ENCODE measurements at regions of chr2 and their contacts with region 1.

Region 1: DNA sequence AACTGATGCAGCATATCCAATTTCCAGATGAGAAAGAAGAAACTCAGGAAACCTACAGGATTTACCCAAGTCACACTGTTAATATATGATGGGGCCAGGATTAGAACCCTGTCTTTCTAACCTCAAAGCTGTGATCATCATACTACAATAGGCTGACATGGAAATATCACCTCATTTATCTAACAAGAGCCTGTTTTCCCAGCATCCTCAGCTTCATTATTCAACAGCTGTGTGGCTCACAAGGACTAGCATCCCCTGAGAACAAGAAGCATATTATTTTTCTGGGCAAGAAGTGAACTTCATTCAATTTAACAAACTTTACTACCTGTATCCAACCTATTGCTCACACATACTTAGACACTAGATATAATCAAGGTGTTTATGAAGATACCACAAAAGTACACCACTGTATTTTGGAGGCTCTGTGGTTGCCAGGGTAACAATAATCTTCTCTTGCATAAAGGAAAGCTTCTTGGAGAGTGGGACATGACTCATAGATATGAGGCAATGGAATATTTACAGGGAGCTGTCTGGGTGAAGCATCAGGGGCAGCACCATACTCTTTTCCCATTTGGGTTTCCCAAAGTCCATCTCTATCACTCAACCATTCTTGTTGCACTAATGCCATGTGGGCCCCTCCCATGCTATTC is 218.2 kb downstream of the RAD51AP2 start:
- DNase-seq: peak; percentile 99
- H3K4me3 ChIP-seq: no peak overlapping the region
- H3K27ac ChIP-seq: peak overlapping the region; percentile 82
- H3K4me1 ChIP-seq: peaks cover 35% of the 10 kb centered on the region
- H3K27me3 ChIP-seq: no peaks in the 10 kb centered on the region
- CTCF ChIP-seq: no peak

Region 2: DNA sequence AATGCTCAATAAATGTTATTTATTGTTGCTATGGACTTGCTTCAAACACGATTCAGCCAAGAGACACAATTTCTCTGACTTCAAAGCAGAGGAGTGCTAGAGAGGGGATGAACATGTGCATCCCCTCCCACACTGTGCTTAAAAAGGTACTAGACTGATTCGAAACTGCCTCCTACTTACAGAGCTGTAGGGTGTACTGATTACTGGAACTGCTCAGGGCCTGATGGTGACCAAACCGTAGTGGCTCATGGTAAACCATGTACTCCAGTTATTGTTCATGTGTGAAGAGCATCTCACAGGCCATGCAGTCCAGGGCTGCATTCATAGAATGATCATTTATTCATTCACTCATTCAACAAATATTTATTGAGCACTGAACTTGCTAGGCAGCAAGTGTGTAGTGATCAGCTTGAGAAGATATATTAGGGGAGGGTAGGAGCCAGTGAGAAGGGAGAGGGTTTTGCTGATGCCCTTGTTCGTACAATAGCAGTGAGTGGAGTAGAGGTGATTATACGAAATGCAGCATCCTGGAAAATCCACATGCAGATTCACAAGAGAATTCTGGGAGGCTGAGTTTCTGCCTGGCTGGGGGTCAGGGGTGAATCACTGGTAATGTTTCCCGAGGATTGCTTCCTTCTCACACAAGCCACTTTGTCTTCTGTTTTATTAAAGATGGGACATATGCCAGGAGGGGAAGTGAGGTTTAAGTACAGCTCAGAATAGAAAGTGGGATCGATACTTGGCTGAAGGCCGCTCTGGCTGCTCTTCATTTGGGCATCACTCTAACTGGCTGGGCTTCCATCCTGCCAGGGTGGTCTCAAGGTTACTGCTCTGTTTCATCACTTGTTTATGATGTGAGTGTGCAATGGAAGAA is 27.1 kb before region 1 on chr2:
- CTCF ChIA-PET with region 1: no interaction called
- dilution Hi-C with region 1: no loop called
- in situ Hi-C with region 1: no loop called
- intact Hi-C with region 1: loop called (anchors 2 kb)
- DNase-seq: peak; percentile 37
- H3K4me3 ChIP-seq: no peak overlapping the region
- H3K27ac ChIP-seq: peak overlapping the region; percentile 39
- H3K4me1 ChIP-seq: peaks cover 11% of the 10 kb centered on the region
- H3K27me3 ChIP-seq: no peaks in the 10 kb centered on the region
- CTCF ChIP-seq: no peak

Region 3: GRCh38 chr2:17416884-17417391 is 116.9 kb after region 1 on chr2:
- CTCF ChIA-PET with region 1: no interaction called
- dilution Hi-C with region 1: no loop called
- in situ Hi-C with region 1: no loop called
- intact Hi-C with region 1: loop called (anchors 2 kb)
- DNase-seq: peak; percentile 99
- H3K4me3 ChIP-seq: no peak overlapping the region
- H3K27ac ChIP-seq: peak overlapping the region; percentile 89
- H3K4me1 ChIP-seq: peaks cover 21% of the 10 kb centered on the region
- H3K27me3 ChIP-seq: no peaks in the 10 kb centered on the region
- CTCF ChIP-seq: no peak

Region 4: DNA sequence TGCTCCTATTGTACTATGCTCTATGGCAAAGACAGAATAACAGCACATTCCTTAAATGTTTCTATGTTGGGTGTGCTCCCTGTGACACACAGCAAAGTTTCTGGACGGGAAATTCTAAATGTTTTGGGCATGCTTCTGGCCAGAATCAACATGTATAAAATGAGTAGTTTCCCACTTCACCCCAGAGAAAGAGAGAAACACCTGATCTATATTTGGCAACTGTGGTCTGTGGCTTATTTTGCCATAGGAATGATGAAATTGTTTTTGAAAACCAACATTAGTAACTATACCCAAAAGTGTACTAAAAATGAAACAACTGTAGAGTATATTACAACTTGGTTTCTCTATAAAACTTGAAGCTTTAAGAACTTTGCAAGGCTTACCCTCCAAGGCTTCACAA is 129.1 kb after region 1 on chr2:
- CTCF ChIA-PET with region 1: no interaction called
- dilution Hi-C with region 1: no loop called
- in situ Hi-C with region 1: no loop called
- intact Hi-C with region 1: loop called (anchors 1 kb)
- DNase-seq: peak; percentile 95
- H3K4me3 ChIP-seq: peak overlapping the region in 1 of 3 experiments; percentile 15
- H3K27ac ChIP-seq: peak overlapping the region; percentile 82
- H3K4me1 ChIP-seq: peaks cover 27% of the 10 kb centered on the region
- H3K27me3 ChIP-seq: no peaks in the 10 kb centered on the region
- CTCF ChIP-seq: no peak

Measured in mammary epithelial cell (primary cell).